IMR-90 (cell line): ENCODE measurements at regions of chr19 and their contacts with region 1.

Region 1: GRCh38 chr19:19568802-19569756 is 31.0 kb downstream of the CILP2 start:
- DNase-seq: peak; percentile 67
- ATAC-seq: peak; percentile 67
- H3K4me3 ChIP-seq: no peak overlapping the region
- H3K27ac ChIP-seq: no peak overlapping the region
- H3K4me1 ChIP-seq: peaks cover 5% of the 10 kb centered on the region
- H3K27me3 ChIP-seq: no peaks in the 10 kb centered on the region
- CTCF ChIP-seq: no peak
- POLR2A ChIP-seq: no peak
- RAD21 ChIP-seq: no peak

Region 2: GRCh38 chr19:19514215-19514633 is 54.9 kb before region 1 on chr19:
- CTCF ChIA-PET with region 1: no interaction called
- POLR2A ChIA-PET with region 1: no interaction called
- dilution Hi-C with region 1: no loop called
- in situ Hi-C with region 1: no loop called
- intact Hi-C with region 1: no loop called
- DNase-seq: no peak
- ATAC-seq: no peak
- H3K4me3 ChIP-seq: no peak overlapping the region
- H3K27ac ChIP-seq: no peak overlapping the region
- H3K4me1 ChIP-seq: peaks cover 5% of the 10 kb centered on the region; the same call in 1 of the 2 replicates
- H3K27me3 ChIP-seq: no peaks in the 10 kb centered on the region
- CTCF ChIP-seq: no peak
- POLR2A ChIP-seq: no peak
- RAD21 ChIP-seq: no peak

Region 3: DNA sequence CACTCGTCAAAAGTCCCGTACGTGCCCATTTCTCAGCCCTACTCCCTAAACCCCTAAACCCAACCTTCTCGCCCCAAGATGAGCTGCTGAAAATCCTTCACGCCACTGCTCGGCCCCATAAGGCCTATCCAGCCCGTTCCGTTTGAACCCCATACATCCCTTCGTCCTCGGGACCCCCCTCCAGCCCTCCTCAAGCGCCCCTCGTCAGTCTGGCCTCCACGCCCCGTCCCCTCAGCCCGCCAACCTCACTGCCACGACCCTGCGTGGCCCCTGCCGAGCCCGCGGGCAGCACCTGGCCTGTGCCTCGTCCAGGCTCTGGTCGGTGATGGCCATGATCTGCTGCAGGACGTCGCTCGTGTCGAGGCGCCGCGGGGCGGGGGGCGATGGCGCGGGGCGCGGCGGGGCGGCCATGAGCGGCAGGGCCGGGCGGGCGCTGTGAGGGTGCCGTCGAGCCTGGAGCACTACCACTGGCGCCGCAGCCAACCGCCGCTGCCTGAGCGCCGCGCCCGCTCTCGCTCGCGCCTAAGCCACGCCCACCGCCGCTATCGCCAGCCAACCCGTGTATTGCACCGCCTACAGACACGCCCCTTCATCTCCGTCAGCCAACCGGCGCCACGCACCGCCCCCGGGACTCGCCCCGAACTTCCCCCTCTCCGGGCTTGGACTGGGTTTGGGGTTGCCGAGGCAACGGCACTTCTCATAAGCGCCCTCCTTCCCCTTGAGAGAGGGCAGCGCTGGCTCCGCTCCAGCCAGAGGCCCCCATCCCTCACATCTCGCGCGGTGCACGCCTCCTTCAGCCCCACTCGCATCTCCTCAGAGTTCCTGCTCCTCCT is 49.4 kb after region 1 on chr19 and contains the start of gene PBX4:
- CTCF ChIA-PET with region 1: no interaction called
- POLR2A ChIA-PET with region 1: no interaction called
- dilution Hi-C with region 1: no loop called
- in situ Hi-C with region 1: no loop called
- intact Hi-C with region 1: loop called (anchors 5 kb)
- DNase-seq: peak; percentile 82
- ATAC-seq: peak; percentile 100
- H3K4me3 ChIP-seq: peak within 1 kb of the TSS; percentile 65
- H3K27ac ChIP-seq: peak within 1 kb of the TSS; percentile 23; the same call in 1 of the 2 replicates
- H3K4me1 ChIP-seq: peaks cover 7% of the 10 kb centered on the region
- H3K27me3 ChIP-seq: no peaks in the 10 kb centered on the region
- CTCF ChIP-seq: no peak
- POLR2A ChIP-seq: 0 out of 2 replicates have a peak, but pooled peaks have one; percentile 26
- RAD21 ChIP-seq: no peak
- total RNA-seq, gene PBX4: 0.90 and 1.4 TPM in 2 replicates

Region 4: GRCh38 chr19:19677579-19677978 is 108.5 kb after region 1 on chr19:
- CTCF ChIA-PET with region 1: no interaction called
- POLR2A ChIA-PET with region 1: no interaction called
- dilution Hi-C with region 1: no loop called
- in situ Hi-C with region 1: no loop called
- intact Hi-C with region 1: no loop called
- DNase-seq: no peak
- ATAC-seq: no peak
- H3K4me3 ChIP-seq: no peak overlapping the region
- H3K27ac ChIP-seq: no peak overlapping the region
- H3K4me1 ChIP-seq: no peaks in the 10 kb centered on the region
- H3K27me3 ChIP-seq: no peaks in the 10 kb centered on the region
- CTCF ChIP-seq: no peak
- POLR2A ChIP-seq: no peak
- RAD21 ChIP-seq: no peak